ENCODE measurements at regions of chr11 and their contacts with region 1.

Region 1: GRCh38 chr11:64358907-64359711 is at the start of gene RPS6KA4:
- H3K4me3 ChIP-seq: peak within 1 kb of the TSS; percentile 83
- H3K27ac ChIP-seq: peak within 1 kb of the TSS; percentile 75; the same call in 1 of the 2 replicates
- H3K4me1 ChIP-seq: no peaks in the 10 kb centered on the region; the same call in 1 of the 2 replicates
- CTCF ChIP-seq: no peak

Region 2: GRCh38 chr11:64269380-64270234 is 89.5 kb before region 1 on chr11:
- CTCF ChIA-PET with region 1: interaction called, 15 read pairs
- POLR2A ChIA-PET with region 1: interaction called, 6 read pairs
- H3K4me3 ChIP-seq: peak overlapping the region; percentile 70
- H3K27ac ChIP-seq: peak overlapping the region; percentile 83
- H3K4me1 ChIP-seq: 0 out of 2 replicates have a peak, but pooled peaks cover 2% of the 10 kb centered on the region
- CTCF ChIP-seq: 0 out of 2 replicates have a peak, but pooled peaks have one; percentile 25

Region 3: DNA sequence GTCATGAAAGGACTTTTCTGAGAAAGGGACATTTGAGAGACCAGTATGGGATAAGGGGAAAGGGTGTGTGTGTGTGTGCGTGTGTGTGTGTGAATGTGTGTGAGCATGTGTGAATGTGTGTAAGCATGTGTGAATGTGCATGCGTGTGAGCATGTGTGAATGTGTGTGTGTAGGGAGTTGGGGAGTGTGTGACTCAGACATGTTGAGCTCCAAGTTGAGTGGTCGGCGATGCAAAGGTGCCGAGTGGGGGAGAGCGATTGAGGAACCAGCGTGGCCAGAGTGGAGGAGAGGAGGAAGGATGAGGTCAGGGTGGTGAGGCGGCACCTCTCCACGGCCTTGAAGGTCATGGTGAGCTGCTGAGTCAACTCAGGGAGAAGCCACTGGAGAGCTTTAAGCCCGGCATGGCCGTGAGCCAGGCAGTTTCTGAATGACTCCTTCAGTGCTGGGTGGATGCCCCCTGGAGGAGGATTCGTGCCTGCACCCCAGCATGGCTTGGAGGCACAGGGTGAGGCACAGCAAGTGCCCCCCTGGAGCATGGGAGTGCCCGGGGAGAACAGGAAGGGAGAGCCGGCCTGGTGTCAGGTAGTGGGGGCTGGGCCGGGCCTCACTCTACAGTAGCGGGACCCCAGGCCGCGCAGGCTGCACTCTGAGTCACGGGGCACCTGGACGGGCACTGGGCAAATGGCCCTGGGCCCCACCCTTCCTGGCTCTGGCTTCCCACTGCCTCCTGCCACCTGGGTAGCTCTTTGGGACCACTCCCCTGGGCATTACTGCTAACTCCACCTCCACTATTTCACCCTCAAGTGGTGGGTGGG is 27.3 kb before region 1 on chr11:
- CTCF ChIA-PET with region 1: interaction called, 81 read pairs
- POLR2A ChIA-PET with region 1: interaction called, 7 read pairs
- H3K4me3 ChIP-seq: no peak overlapping the region
- H3K27ac ChIP-seq: no peak overlapping the region
- H3K4me1 ChIP-seq: no peaks in the 10 kb centered on the region
- CTCF ChIP-seq: peak; percentile 60

Region 4: GRCh38 chr11:64376066-64376465 is 17.0 kb after region 1 on chr11:
- CTCF ChIA-PET with region 1: interaction called, 10 read pairs
- POLR2A ChIA-PET with region 1: interaction called, 4 read pairs
- H3K4me3 ChIP-seq: no peak overlapping the region
- H3K27ac ChIP-seq: no peak overlapping the region
- H3K4me1 ChIP-seq: no peaks in the 10 kb centered on the region
- CTCF ChIP-seq: no peak

Region 5: DNA sequence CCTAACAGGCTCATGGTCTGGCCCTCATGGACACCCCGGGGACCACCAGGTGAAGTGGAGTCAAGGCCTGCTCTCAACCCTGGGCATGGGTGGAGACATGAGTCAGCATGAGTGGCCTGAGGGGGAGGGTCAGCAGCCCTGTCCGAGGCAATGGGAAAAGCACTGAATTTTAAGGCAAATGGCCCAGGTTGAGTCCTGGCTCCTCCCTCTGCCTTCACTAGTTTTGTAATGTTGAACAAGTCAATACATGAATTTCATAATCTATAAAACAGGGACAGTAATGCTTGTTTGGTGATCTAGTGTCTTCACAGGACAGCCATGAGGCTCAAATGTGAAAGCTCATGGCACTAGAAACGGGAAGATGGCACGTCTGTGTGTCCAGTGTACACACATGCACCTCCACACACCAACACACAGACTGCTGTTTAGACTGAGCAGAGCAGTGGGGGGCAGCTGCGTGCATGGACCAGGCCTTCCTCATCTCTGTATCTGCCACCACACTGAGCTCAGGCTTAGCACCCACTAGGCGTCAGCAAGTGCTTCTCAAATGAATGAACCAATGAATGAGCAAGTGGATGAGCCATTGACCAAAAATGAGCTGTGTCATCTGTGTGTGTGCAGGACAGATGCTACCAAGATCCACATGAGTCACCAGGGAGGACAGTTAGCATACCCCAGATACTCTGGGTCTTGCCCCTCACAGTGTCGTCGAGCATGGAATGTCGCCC is 300.5 kb after region 1 on chr11:
- CTCF ChIA-PET with region 1: interaction called, 12 read pairs
- POLR2A ChIA-PET with region 1: no interaction called
- H3K4me3 ChIP-seq: no peak overlapping the region
- H3K27ac ChIP-seq: no peak overlapping the region
- H3K4me1 ChIP-seq: no peaks in the 10 kb centered on the region
- CTCF ChIP-seq: no peak